Activated CD4-positive, alpha-beta memory T cell treated with anti-CD3 and anti-CD28 coated beads for 36 hours (primary cell): ENCODE measurements at regions of chr11 and their contacts with region 1.

Region 1: GRCh38 chr11:108008656-108009496 is at the start of gene CUL5:
- DNase-seq: peak; percentile 94
- H3K4me3 Mint-ChIP-seq: peak within 1 kb of the TSS; percentile 93
- H3K27ac Mint-ChIP-seq: peak within 1 kb of the TSS; percentile 93
- H3K4me1 Mint-ChIP-seq: peaks cover 17% of the 10 kb centered on the region
- H3K27me3 Mint-ChIP-seq: no peaks in the 10 kb centered on the region
- total RNA-seq, gene CUL5: 27.7 to 30.7 TPM

Region 2: GRCh38 chr11:107457558-107458271 is 551.2 kb before region 1 on chr11 and contains the start of gene CWF19L2:
- CTCF ChIA-PET with region 1: no interaction called
- POLR2A ChIA-PET with region 1: no interaction called
- intact Hi-C with region 1: loop called (anchors 10 kb)
- DNase-seq: peak; percentile 94
- H3K4me3 Mint-ChIP-seq: peak within 1 kb of the TSS; percentile 89
- H3K27ac Mint-ChIP-seq: peak within 1 kb of the TSS; percentile 77
- H3K4me1 Mint-ChIP-seq: peaks cover 23% of the 10 kb centered on the region
- H3K27me3 Mint-ChIP-seq: no peaks in the 10 kb centered on the region
- total RNA-seq, gene CWF19L2: 14.0 to 14.4 TPM

Region 3: GRCh38 chr11:107705027-107705426 is 303.8 kb before region 1 on chr11:
- CTCF ChIA-PET with region 1: no interaction called
- POLR2A ChIA-PET with region 1: no interaction called
- intact Hi-C with region 1: no loop called
- DNase-seq: no peak
- H3K4me3 Mint-ChIP-seq: no peak overlapping the region
- H3K27ac Mint-ChIP-seq: no peak overlapping the region
- H3K4me1 Mint-ChIP-seq: no peaks in the 10 kb centered on the region
- H3K27me3 Mint-ChIP-seq: peaks cover 16% of the 10 kb centered on the region

Region 4: DNA sequence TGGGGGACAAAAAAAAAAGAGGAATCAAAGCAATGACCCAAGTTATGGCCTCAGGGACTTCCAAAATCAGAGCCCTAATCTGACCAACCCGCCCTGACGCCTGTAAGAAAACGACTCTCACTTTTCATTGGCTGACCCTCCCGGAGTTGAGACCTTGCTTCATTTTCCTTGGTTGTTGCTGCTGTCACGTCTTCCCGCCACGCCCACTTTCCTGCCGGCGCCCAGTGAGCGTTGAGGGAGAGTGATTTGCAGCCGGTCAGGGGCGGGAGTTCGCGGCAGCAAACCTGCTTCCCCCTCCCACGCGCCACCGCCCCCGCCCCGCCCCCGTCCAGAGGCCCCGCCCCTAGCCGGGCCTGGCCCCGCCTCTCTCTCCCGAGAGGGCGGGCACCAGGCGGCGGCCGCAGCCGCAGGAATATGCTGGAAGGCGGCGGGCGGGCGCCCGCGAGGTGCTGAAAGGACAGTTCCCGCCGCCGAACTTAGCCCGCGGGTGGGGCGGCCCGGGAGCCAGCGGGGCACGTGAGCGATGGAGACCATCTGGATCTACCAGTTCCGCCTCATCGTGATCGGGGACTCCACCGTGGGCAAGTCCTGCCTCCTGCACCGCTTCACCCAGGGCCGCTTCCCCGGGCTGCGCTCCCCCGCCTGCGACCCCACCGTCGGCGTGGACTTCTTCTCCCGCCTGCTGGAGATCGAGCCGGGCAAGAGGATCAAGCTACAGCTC is 80.7 kb before region 1 on chr11 and contains the start of gene RAB39A:
- CTCF ChIA-PET with region 1: no interaction called
- POLR2A ChIA-PET with region 1: no interaction called
- intact Hi-C with region 1: loop called (anchors 1 kb)
- DNase-seq: peak; percentile 85
- H3K4me3 Mint-ChIP-seq: peak within 1 kb of the TSS; percentile 66
- H3K27ac Mint-ChIP-seq: no peak within 1 kb of the TSS
- H3K4me1 Mint-ChIP-seq: peaks cover 13% of the 10 kb centered on the region
- H3K27me3 Mint-ChIP-seq: peaks cover 34% of the 10 kb centered on the region
- total RNA-seq, gene RAB39A: 0.29 to 0.71 TPM

Region 5: GRCh38 chr11:108025387-108026080 is 16.7 kb after region 1 on chr11:
- CTCF ChIA-PET with region 1: interaction called, 19 read pairs
- POLR2A ChIA-PET with region 1: no interaction called
- intact Hi-C with region 1: loop called (anchors 2 kb)
- DNase-seq: peak; percentile 26
- H3K4me3 Mint-ChIP-seq: no peak overlapping the region
- H3K27ac Mint-ChIP-seq: peak overlapping the region; percentile 60
- H3K4me1 Mint-ChIP-seq: peaks cover 47% of the 10 kb centered on the region
- H3K27me3 Mint-ChIP-seq: no peaks in the 10 kb centered on the region

Region 6: GRCh38 chr11:108121274-108122155 is 112.6 kb after region 1 on chr11 and contains the start of gene ACAT1:
- CTCF ChIA-PET with region 1: interaction called, 5 read pairs
- POLR2A ChIA-PET with region 1: interaction called, 3 read pairs
- intact Hi-C with region 1: loop called (anchors 2 kb)
- DNase-seq: peak; percentile 98
- H3K4me3 Mint-ChIP-seq: peak within 1 kb of the TSS; percentile 87
- H3K27ac Mint-ChIP-seq: peak within 1 kb of the TSS; percentile 67
- H3K4me1 Mint-ChIP-seq: peaks cover 38% of the 10 kb centered on the region
- H3K27me3 Mint-ChIP-seq: no peaks in the 10 kb centered on the region
- total RNA-seq, gene ACAT1: 58.3 to 64.9 TPM

Region 7: DNA sequence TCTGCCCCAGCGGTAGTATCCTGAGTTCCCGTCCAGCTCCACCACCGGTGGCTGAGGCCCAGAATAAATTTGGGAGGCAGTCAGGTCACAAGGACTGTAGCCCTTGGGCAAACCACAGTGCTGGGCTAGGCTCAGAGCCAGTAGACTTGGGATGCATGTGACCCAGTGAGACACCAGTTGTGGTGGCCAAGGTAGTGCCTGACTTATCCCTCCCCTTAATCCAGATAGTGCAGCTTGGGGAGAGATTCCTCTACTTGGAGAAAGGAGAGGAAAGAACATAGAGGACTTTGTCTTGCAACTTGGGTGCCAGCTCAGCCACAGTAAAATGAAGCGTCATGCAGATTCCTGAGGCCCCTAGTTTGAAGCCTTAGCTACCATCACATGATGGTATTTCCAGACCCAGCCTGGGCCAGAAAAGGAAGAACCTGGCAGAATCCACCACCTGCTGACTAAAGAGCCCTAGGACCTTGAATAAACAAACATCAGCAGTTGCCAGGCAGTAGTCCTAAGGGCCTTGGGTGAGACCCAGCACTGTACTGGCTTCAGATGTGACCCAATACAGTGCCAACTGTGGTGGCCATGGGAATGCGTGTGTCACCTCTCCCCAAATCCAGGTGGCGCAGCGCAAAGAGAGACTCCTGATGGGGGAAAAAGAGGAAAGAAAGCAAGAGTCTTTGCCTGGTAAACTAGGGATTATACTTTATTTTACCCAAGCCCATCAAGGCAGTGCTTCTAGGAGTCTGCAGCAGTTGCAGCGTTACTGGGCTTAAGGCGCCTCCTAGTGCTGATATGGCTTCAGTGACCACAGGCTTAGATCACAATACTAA is 639.0 kb after region 1 on chr11:
- CTCF ChIA-PET with region 1: interaction called, 8 read pairs
- POLR2A ChIA-PET with region 1: no interaction called
- intact Hi-C with region 1: loop called (anchors 5 kb)
- DNase-seq: peak; percentile 76
- H3K4me3 Mint-ChIP-seq: no peak overlapping the region
- H3K27ac Mint-ChIP-seq: no peak overlapping the region
- H3K4me1 Mint-ChIP-seq: no peaks in the 10 kb centered on the region
- H3K27me3 Mint-ChIP-seq: no peaks in the 10 kb centered on the region